ENCODE measurements at regions of chr5 and their contacts with region 1.

Region 1: DNA sequence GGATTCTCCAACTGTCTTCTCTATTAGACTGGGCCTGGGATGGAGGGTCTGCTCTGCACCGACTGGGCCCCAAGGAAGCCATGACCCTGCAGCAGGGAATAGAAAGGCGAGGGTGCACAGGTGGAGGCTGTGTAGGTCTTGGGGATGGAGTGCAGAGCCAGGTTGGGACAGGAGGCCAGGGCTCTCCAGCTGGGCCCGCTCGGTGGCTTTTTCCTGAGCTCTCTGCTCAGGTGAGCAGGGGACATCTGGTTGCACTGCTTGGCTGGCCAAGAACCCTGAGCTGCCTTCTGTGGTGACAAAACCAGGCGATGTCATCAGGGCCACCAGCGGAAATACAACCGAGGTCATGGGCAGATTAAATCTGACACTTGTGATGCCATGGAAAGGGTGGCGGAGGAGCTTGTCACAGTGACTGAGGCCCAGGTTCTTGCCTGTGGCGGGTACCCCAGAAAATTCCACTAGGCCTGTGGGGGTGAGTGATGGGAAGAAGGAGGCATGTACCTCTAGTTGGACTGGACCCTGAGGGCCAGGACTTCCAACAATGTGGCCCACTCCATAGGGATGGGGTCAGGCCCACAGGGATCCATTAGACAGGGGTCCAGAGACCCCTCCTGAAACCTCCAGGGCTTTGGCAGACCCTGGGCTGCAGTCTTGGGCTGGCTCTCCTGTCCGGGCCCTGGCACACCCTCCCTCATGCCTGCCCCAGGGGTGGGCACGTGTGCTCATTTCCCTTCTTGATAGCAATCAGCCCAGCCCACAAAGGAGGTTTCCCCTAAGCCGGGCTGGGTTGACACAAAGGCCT is 4.4 kb upstream of the IL3 start:
- DNase-seq: peak; percentile 59
- ATAC-seq: peak; percentile 80
- H3K4me3 Mint-ChIP-seq: no peak overlapping the region
- H3K27ac Mint-ChIP-seq: peak overlapping the region; percentile 40
- H3K4me1 Mint-ChIP-seq: peaks cover 30% of the 10 kb centered on the region
- H3K27me3 Mint-ChIP-seq: no peaks in the 10 kb centered on the region
- CTCF ChIP-seq: no peak

Region 2: DNA sequence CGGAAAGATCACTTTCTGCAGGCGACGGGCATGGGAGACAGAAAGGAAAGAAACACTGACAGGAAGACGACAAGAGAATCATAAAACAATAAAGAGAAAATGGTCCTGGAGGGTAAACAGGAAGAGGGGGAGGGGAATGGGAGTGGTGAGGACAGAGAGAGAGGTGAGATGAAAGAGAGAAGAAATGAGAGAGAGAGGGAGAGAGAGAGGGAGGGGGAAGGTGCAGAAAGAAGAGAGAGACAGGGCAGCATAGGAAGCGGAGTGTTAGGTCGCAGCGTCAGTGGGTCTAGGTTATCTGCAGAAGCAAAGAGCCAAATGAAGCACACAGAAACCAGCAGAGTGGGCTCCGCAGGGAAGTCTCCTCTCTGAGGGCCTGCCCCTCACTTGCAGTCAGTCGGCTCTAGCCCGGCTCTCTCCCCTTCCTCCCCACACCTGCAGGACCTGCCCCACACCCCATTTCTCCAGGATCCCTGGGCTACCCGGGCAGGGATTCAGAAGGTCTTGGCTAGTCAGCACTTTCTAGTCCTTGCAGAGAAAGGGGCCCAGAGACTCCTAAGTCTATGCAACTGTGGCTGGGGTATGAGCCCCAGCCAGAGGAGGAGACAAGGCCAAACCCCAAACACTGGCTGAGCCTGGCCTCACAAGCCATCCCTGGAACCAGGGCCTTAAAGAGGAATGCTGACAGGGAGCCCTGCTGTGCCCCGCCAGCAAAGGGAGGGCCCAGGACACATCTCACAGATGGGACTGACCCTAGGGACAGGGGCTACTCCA is 80.9 kb before region 1 on chr5:
- CTCF ChIA-PET with region 1: no interaction called
- POLR2A ChIA-PET with region 1: no interaction called
- intact Hi-C with region 1: loop called (anchors 10 kb)
- DNase-seq: peak; percentile 29
- ATAC-seq: peak; percentile 70
- H3K4me3 Mint-ChIP-seq: peak overlapping the region; percentile 48
- H3K27ac Mint-ChIP-seq: peak overlapping the region; percentile 86
- H3K4me1 Mint-ChIP-seq: peaks cover 51% of the 10 kb centered on the region
- H3K27me3 Mint-ChIP-seq: no peaks in the 10 kb centered on the region
- CTCF ChIP-seq: no peak

Region 3: GRCh38 chr5:132019857-132020555 is 36.0 kb before region 1 on chr5:
- CTCF ChIA-PET with region 1: interaction called, 3 read pairs
- POLR2A ChIA-PET with region 1: interaction called, 3 read pairs
- intact Hi-C with region 1: loop called (anchors 5 kb)
- DNase-seq: peak; percentile 92
- ATAC-seq: peak; percentile 90
- H3K4me3 Mint-ChIP-seq: peak overlapping the region; percentile 56
- H3K27ac Mint-ChIP-seq: peak overlapping the region; percentile 94
- H3K4me1 Mint-ChIP-seq: peaks cover 44% of the 10 kb centered on the region
- H3K27me3 Mint-ChIP-seq: peaks cover 17% of the 10 kb centered on the region
- CTCF ChIP-seq: no peak

Measured in activated CD8-positive, alpha-beta T cell treated with anti-CD3 and anti-CD28 coated beads for 36 hours (primary cell).